ENCODE measurements at regions of chr16 and their contacts with region 1.

Region 1: DNA sequence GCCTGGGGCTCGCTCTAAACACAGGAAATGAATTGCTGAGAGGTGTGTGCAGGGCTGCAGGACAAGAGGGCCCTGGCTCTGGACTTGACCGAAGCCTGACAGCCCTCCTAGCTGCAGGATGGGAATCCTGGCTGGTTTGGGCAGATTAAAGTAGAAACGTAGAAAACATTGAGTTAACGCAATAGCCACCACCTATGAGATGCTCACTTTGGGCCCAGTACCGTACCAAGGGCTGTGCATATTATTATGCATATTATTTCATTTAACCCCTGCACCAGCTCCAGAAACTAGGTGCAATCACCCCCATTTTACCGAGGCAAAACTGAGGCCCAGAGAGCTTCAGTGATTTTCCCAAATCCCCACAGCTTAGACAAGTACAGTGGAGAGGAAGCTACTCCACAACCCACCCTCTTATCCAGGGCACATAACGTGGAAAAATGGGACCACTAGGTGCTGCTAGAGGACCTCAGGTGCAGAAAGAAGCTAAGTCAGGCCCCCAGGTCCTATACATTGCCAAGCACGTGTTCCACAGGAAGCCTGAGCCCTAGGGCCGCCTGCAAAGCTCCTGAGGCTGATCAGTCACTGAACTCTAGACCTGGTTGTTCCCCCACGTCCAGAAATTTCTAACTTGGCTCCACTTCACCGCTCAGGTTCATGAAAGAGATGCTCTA is 79.2 kb downstream of the MYH11 start:
- DNase-seq: no peak
- ATAC-seq: peak in 2 of 4 donors; percentile 23 to 43
- H3K4me3 ChIP-seq: no peak overlapping the region
- H3K27ac ChIP-seq: no peak overlapping the region
- H3K4me1 ChIP-seq: no peaks in the 10 kb centered on the region
- H3K27me3 ChIP-seq: no peaks in the 10 kb centered on the region
- CTCF ChIP-seq: no peak

Region 2: DNA sequence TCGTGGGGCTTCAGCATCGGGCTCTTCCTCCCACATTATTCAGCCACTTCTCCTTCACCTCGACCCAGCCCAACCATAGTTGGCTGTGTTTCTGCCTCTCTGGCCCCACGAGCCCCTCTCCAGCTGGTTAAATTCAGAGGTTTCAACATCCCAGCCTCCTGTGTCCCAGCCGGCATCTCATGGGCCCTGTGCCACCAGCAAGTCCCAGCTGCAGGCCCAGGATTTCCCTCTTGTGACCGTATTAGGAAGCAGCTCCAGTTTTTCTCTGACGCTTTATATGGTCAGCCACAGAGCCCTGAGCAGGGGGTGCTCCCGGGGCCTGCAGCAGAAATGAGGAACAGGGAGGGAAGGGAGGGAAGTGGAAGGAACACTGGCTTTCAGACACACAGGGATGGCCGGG is 51.8 kb after region 1 on chr16:
- intact Hi-C with region 1: loop called in 1 of 3 experiments (anchors 10 kb)
- DNase-seq: peak in 1 of 6 donors; percentile 11
- ATAC-seq: peak in 3 of 4 donors; percentile 43 to 71 (median 47)
- H3K4me3 ChIP-seq: no peak overlapping the region
- H3K27ac ChIP-seq: no peak overlapping the region
- H3K4me1 ChIP-seq: no peaks in the 10 kb centered on the region
- H3K27me3 ChIP-seq: no peaks in the 10 kb centered on the region
- CTCF ChIP-seq: no peak

Region 3: DNA sequence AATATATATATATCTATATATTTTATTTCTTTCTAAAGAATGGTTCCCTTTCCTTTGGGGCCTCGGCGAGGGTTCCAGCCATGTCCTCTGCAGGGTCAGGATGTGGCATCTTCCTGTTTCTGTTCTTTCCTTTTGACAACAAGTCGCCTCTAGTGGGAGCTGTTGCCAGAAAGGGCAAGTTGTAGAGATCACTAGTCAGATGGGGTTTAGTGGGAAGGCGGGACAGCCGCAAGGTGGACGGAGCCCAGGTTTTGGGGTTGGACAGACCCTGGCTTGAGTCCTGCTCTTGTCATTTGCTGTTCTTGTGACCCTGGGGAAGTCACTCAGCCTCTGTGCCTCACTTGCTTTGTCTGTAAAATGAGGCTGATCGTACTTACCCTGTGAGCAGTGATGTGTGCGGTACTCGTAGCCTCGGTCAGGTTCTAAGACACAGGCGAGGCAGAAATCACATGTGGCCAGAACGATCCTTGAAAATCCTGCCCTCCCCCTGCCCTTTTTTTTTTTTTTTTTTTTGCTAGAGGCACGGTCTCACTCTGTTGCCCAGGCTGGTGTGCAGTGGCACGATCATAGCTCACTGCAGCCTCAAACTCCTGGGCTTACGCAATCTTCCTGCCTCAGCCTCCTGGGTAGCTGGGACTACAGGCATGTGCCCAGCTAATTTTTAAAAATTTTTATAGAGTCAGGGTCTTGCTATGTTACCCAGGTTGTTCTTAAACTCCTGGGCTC is 365.5 kb after region 1 on chr16:
- intact Hi-C with region 1: loop called in 1 of 3 experiments (anchors 10 kb)
- DNase-seq: no peak
- ATAC-seq: no peak
- H3K4me3 ChIP-seq: no peak overlapping the region
- H3K27ac ChIP-seq: no peak overlapping the region
- H3K4me1 ChIP-seq: peaks cover 0 to 5% (median 0%) of the 10 kb centered on the region in 3 donors
- H3K27me3 ChIP-seq: no peaks in the 10 kb centered on the region
- CTCF ChIP-seq: peak in 1 of 4 donors; percentile 6

Measured in pancreas (tissue), 10 donors.